Activated T-helper 2 cell treated with anti-CD3 and anti-CD28 coated beads, Interferon-gamma antibody, Interleukin-2, Interleukin-4, amounts not matched to agents 10 μg/mL and 5 μg/mL and 100 μg/mL, durations not matched to agents 14 hours and 24 hours and 36 hours (primary cell): ENCODE measurements at regions of chr15 and their contacts with region 1.

Region 1: GRCh38 chr15:40893733-40894688 is at the start of gene VPS18:
- DNase-seq: peak; percentile 97
- H3K4me3 Mint-ChIP-seq: peak within 1 kb of the TSS; percentile 100
- H3K27ac Mint-ChIP-seq: peak within 1 kb of the TSS; percentile 97
- H3K4me1 Mint-ChIP-seq: peaks cover 20% of the 10 kb centered on the region
- H3K27me3 Mint-ChIP-seq: peaks cover 1% of the 10 kb centered on the region
- total RNA-seq, gene VPS18: 12.6 and 13.1 TPM in 2 replicates

Region 2: GRCh38 chr15:40593588-40594428 is 300.2 kb before region 1 on chr15 and contains the start of gene KNL1:
- intact Hi-C with region 1: loop called (anchors 5 kb)
- DNase-seq: peak; percentile 90
- H3K4me3 Mint-ChIP-seq: peak within 1 kb of the TSS; percentile 93
- H3K27ac Mint-ChIP-seq: peak within 1 kb of the TSS; percentile 99
- H3K4me1 Mint-ChIP-seq: peaks cover 24% of the 10 kb centered on the region
- H3K27me3 Mint-ChIP-seq: no peaks in the 10 kb centered on the region
- total RNA-seq, gene KNL1: 30.6 and 30.8 TPM in 2 replicates

Region 3: DNA sequence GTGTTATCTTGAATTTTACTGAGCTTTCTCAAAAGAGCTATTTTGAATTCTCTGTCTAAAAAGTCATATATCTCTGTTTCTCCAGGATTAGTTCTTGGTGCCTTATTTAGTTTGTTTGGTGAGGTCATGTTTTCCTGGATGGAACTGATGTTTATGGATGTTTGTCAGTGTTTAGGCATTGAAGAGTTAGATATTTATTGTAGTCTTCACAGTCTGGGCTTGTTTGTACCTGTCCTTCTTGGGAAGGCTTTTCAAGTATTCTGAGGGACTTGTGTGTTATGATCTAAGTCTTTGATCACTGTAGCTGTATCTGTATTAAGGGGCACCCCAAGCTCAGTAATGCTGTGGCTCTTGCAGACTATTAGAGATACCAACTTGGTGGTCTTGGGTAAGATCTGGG is 209.6 kb before region 1 on chr15:
- intact Hi-C with region 1: loop called (anchors 2 kb)
- DNase-seq: no peak
- H3K4me3 Mint-ChIP-seq: no peak overlapping the region
- H3K27ac Mint-ChIP-seq: no peak overlapping the region
- H3K4me1 Mint-ChIP-seq: no peaks in the 10 kb centered on the region
- H3K27me3 Mint-ChIP-seq: no peaks in the 10 kb centered on the region

Region 4: DNA sequence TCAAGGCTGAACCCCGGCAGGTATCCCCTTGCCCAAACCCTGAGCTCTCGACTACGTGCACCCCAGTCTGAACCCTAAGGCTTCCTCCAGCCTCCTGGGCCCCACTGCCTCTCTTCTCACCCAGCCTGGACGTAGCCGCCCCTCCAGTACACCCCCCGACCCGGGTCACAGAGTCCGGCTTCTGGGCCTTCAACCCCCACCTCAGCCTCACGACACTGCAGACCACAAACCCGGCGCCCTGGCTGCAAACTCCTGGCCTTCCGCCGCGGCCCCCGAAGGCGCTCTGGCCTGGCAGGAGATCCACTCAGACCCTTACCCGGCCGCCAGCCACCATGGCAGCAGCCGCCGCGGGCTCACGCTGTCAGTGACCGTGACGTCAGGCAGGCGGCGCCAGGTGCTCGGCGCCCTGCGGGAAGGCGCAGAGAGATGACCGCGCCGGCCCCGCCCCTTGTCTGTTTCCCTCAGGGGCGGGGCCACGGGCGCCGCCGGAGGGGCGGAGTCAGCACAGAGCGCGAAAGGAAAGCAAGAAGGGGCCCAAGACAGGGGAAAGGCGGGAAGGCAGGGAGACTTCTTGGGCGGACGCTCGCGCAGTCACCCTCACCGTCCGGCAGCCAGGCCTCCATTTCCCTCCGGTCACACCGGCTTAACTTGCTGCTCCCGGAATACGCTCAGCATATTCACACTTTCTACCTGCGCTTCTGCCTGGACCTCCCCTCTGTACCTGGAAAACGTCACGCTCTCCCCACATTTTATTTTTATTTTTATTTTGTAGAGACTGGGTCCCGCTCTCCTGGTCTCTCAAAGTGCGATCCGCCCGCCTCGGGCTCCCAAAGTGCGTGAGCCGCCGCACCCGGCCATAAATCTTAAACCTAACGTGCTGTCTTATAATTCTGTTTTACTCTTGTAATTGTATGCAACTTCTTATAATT is 138.9 kb before region 1 on chr15 and contains the start of gene RMDN3:
- intact Hi-C with region 1: loop called (anchors 5 kb)
- DNase-seq: peak; percentile 93
- H3K4me3 Mint-ChIP-seq: peak within 1 kb of the TSS; percentile 94
- H3K27ac Mint-ChIP-seq: peak within 1 kb of the TSS; percentile 98
- H3K4me1 Mint-ChIP-seq: peaks cover 27% of the 10 kb centered on the region
- H3K27me3 Mint-ChIP-seq: no peaks in the 10 kb centered on the region
- total RNA-seq, gene RMDN3: 28.3 and 30.6 TPM in 2 replicates

Region 5: DNA sequence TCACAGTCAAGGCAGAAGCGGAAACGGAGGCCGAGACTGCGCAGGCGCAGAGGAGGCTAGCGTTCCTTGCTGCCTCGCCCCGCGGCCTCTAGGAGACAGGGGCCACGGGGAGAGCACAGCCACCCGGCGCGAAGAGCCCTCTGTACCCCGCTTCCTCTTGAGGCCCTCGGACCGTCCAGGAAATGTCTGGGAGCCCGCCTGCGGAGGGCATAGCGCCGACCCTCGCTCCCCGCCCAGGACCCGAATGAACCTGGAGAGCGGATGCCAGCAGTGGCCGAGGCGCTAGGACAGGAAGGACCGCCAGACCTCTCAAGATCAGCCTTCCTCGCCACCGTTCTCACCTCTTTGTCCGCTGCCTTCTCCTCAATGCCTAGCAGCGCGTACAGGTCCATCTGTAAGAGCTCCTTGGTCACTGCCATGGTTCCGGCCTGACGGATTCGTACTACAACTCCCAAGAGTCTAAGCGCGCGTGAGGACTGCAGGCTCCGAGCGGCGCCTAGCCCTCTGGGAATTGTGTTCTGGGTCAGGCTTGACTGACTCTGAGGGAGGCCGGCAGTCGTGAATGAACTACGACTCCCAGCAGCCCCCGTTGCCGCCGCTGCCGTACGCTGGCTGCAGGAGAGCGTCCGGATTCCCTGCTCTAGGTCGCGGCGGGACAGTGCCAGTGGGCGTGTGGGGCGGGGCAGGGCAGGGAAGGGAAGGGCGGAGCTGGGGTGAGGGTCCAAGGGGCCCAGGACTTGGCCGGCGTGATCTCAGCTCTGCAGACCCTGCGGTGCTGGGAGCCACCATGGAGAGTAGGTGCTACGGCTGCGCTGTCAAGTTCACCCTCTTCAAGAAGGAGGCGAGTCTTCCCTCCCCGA is 86.8 kb before region 1 on chr15 and contains the starts of genes DNAJC17 and ZFYVE19:
- intact Hi-C with region 1: loop called (anchors 1 kb)
- DNase-seq: peak; percentile 93
- H3K4me3 Mint-ChIP-seq: peak within 1 kb of the TSS; percentile 96
- H3K27ac Mint-ChIP-seq: peak within 1 kb of the TSS; percentile 98
- H3K4me1 Mint-ChIP-seq: peaks cover 18% of the 10 kb centered on the region
- H3K27me3 Mint-ChIP-seq: no peaks in the 10 kb centered on the region
- total RNA-seq, gene DNAJC17: 44.4 and 48.0 TPM in 2 replicates
- total RNA-seq, gene ZFYVE19: 37.6 and 39.3 TPM in 2 replicates

Region 6: GRCh38 chr15:40857601-40858341 is 36.2 kb before region 1 on chr15:
- intact Hi-C with region 1: loop called (anchors 1 kb)
- DNase-seq: peak; percentile 77
- H3K4me3 Mint-ChIP-seq: no peak overlapping the region
- H3K27ac Mint-ChIP-seq: no peak overlapping the region
- H3K4me1 Mint-ChIP-seq: peaks cover 12% of the 10 kb centered on the region
- H3K27me3 Mint-ChIP-seq: no peaks in the 10 kb centered on the region